ENCODE measurements at regions of chr17 and their contacts with region 1.

Region 1: GRCh38 chr17:58317421-58318064 is 11.1 kb downstream of the TSPOAP1 start:
- DNase-seq: peak; percentile 90
- H3K4me3 ChIP-seq: no peak overlapping the region
- H3K27ac ChIP-seq: no peak overlapping the region
- H3K4me1 ChIP-seq: peaks cover 6% of the 10 kb centered on the region
- H3K27me3 ChIP-seq: no peaks in the 10 kb centered on the region
- CTCF ChIP-seq: peak; percentile 92 to 93

Region 2: DNA sequence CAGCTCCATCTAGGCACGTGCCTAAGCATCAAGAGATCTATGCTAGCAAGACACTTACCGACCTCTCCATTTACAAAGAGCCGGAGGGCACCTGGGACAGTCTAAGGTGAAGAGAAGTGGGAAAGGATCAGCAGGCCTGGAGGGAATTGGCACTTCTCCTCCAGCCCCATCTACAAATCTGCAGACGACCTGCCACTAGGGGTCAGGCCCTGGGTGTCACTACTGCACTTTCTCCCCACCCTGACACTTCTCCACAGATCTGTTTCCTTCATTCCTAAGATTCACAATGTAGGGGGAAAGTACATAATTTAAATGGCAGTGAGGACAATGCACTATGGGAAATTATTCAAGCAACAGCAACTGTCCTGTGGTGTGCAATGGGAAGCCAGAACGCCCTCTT is 106.6 kb before region 1 on chr17:
- CTCF ChIA-PET with region 1: no interaction called
- dilution Hi-C with region 1: loop called (anchors 5 kb)
- in situ Hi-C with region 1: no loop called
- intact Hi-C with region 1: no loop called
- DNase-seq: no peak
- H3K4me3 ChIP-seq: no peak overlapping the region
- H3K27ac ChIP-seq: no peak overlapping the region
- H3K4me1 ChIP-seq: no peaks in the 10 kb centered on the region
- H3K27me3 ChIP-seq: no peaks in the 10 kb centered on the region
- CTCF ChIP-seq: peak in 1 of 2 donors; percentile 17

Region 3: DNA sequence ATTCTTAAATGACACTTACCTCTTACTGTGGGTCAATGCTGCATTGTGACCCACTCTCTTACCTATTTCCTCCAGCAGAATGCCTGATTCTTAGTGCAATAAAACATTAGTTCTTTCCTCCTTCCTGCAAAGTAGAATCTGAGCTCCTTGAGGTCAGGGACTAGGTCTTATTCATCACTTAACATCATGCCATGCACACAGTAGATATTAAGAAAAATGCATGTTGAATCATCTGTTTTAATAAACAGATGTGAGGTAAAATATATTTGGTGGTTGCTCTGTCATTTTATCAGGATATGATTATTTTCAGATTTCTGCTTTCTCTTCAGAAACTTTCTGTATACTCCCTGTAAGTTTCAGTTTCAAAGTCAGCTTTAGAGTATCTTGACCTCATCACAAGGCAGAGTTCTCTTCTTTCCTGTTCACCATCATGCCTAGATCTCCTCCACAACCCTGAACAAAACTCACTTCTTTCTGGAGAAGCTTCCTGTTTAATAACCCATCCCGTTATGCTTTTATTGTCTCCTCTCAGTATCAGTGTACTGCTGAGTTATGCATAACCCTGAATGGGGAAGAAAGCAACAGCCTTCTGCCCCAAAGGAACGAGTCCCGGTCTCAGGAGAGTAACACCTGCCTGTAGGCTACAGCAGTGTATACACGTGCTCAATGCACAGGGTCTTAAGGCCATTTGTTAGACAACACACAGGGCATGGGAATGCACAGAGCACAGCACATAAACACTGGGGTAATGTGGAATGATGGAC is 64.7 kb after region 1 on chr17:
- CTCF ChIA-PET with region 1: interaction called, 4 read pairs
- dilution Hi-C with region 1: loop called (anchors 5 kb)
- in situ Hi-C with region 1: no loop called
- intact Hi-C with region 1: no loop called
- DNase-seq: no peak
- H3K4me3 ChIP-seq: no peak overlapping the region
- H3K27ac ChIP-seq: no peak overlapping the region
- H3K4me1 ChIP-seq: peaks cover 3% of the 10 kb centered on the region
- H3K27me3 ChIP-seq: no peaks in the 10 kb centered on the region
- CTCF ChIP-seq: no peak